Heart right ventricle (tissue), 16 donors: ENCODE measurements at regions of chr1 and their contacts with region 1.

Region 1: GRCh38 chr1:227016990-227017389 is 76.9 kb downstream of the COQ8A start:
- DNase-seq: no peak
- ATAC-seq: no peak
- H3K4me3 ChIP-seq: no peak overlapping the region
- H3K27ac ChIP-seq: no peak overlapping the region
- H3K4me1 ChIP-seq: no peaks in the 10 kb centered on the region
- H3K27me3 ChIP-seq: no peaks in the 10 kb centered on the region
- CTCF ChIP-seq: no peak

Region 2: DNA sequence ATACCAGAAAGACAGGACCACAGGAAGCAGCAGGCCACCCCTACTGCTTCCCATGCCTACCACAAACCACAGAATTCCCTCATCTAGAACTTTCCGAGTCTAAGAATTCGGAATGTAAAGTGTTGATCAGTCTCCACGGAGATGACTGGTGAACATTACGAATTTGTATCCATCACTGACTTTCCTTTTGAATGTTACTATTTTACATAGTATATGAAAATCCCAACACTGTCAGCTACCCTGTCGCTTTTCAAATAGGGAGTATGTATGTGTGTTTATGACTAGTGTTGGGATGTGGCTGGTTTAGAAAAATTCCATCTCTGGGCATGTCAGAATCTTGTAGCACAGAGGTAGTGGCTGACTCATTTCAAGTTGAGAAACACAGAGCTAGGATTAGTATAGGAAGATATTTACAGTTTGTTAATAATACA is 41.3 kb after region 1 on chr1:
- intact Hi-C with region 1: loop called in 1 of 10 experiments (anchors 5 kb)
- DNase-seq: no peak
- ATAC-seq: no peak
- H3K4me3 ChIP-seq: no peak overlapping the region
- H3K27ac ChIP-seq: no peak overlapping the region
- H3K4me1 ChIP-seq: peaks cover 0 to 10% (median 0%) of the 10 kb centered on the region in 9 donors
- H3K27me3 ChIP-seq: no peaks in the 10 kb centered on the region
- CTCF ChIP-seq: no peak